ENCODE measurements at regions of chr19 and their contacts with region 1.

Region 1: GRCh38 chr19:2543463-2544442 is 67.8 kb downstream of the GADD45B start:
- DNase-seq: peak; percentile 97
- H3K4me3 ChIP-seq: peak overlapping the region in 1 of 3 experiments; percentile 20
- H3K27ac ChIP-seq: peak overlapping the region; percentile 99
- H3K4me1 ChIP-seq: peaks cover 58% of the 10 kb centered on the region
- H3K27me3 ChIP-seq: no peaks in the 10 kb centered on the region
- CTCF ChIP-seq: peak; percentile 22 to 46
- POLR2A ChIP-seq: peak; percentile 55

Region 2: DNA sequence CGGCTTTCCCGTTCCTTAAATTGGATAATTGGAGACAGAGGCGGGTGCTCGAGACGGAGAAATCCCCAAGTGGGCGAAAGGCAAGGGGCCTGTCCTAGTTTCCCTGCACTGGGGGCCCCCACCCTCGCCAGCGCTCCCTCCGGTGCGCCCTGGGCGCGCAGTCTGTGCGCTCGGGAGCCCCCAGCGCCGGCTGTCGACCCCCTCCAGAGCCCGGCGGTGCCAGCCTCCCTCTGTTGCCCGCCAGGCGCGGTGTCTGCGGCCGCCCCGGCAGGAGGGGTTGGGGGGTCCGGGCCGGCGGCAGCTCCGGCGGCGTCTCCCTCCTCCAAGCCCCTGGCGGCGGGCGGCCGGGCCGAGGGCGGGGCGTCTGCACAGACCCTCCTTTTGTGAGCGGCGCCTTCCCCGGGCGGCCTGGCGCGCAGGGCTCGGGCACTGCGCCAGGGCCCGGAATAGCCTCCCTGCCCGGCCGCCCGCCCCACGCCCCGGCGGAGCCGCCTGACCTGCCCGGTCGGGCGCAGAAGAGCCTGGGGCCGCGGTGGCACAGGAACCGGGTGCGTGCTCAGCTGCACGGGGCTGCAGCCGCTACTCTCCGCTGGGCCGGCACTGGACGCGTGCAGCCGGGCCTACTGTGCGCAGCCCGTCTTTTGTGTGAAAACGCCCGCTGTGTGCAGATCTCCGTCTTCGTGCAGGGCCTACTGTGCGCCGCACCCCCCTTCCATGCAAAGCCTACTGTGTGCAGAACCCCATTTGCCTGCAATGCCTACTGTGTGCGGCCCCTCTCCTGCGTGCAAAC is 54.6 kb before region 1 on chr19:
- CTCF ChIA-PET with region 1: interaction called, 4 read pairs
- POLR2A ChIA-PET with region 1: no interaction called
- dilution Hi-C with region 1: no loop called
- intact Hi-C with region 1: loop called (anchors 1 kb)
- DNase-seq: peak; percentile 34
- H3K4me3 ChIP-seq: peak overlapping the region; percentile 14 to 25 (median 15)
- H3K27ac ChIP-seq: peak overlapping the region; percentile 19
- H3K4me1 ChIP-seq: peaks cover 18% of the 10 kb centered on the region
- H3K27me3 ChIP-seq: no peaks in the 10 kb centered on the region
- CTCF ChIP-seq: no peak
- POLR2A ChIP-seq: no peak

Region 3: GRCh38 chr19:2494444-2495129 is 49.2 kb before region 1 on chr19:
- CTCF ChIA-PET with region 1: interaction called, 4 read pairs
- POLR2A ChIA-PET with region 1: interaction called, 3 read pairs
- dilution Hi-C with region 1: no loop called
- intact Hi-C with region 1: loop called (anchors 1 kb)
- DNase-seq: peak; percentile 57
- H3K4me3 ChIP-seq: peak overlapping the region; percentile 41 to 60 (median 50)
- H3K27ac ChIP-seq: peak overlapping the region; percentile 88
- H3K4me1 ChIP-seq: peaks cover 22% of the 10 kb centered on the region
- H3K27me3 ChIP-seq: no peaks in the 10 kb centered on the region
- CTCF ChIP-seq: no peak
- POLR2A ChIP-seq: no peak

Region 4: GRCh38 chr19:2507109-2507508 is 36.6 kb before region 1 on chr19:
- CTCF ChIA-PET with region 1: interaction called, 3 read pairs
- POLR2A ChIA-PET with region 1: interaction called, 5 read pairs
- dilution Hi-C with region 1: no loop called
- intact Hi-C with region 1: loop called (anchors 1 kb)
- DNase-seq: peak; percentile 93
- H3K4me3 ChIP-seq: no peak overlapping the region
- H3K27ac ChIP-seq: peak overlapping the region; percentile 86
- H3K4me1 ChIP-seq: peaks cover 8% of the 10 kb centered on the region
- H3K27me3 ChIP-seq: no peaks in the 10 kb centered on the region
- CTCF ChIP-seq: no peak
- POLR2A ChIP-seq: peak; percentile 63

Region 5: DNA sequence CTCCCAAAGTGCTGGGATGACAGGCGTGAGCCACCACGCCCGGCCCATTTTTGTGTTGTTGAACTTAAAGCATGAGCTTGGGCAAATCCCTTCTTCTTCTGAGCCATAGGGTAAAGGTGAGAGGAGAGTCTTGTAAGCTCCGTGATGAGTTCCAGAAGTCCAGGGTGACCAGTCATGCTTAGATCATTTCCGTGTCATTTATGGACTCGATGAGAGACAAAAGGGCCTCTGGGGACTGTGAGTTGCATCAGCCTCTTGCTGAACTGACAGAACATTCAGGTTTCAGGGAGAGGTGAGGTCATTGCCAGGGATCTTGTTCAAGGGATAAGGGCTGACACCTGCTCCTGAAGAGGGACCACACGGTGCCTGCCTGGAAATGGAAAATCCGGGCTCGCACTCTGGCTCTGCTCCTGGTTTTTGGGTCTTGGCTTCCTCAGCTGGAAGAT is 14.3 kb before region 1 on chr19:
- CTCF ChIA-PET with region 1: interaction called, 20 read pairs
- POLR2A ChIA-PET with region 1: interaction called, 9 read pairs
- dilution Hi-C with region 1: no loop called
- intact Hi-C with region 1: loop called (anchors 1 kb)
- DNase-seq: peak; percentile 75
- H3K4me3 ChIP-seq: no peak overlapping the region
- H3K27ac ChIP-seq: peak overlapping the region; percentile 75
- H3K4me1 ChIP-seq: peaks cover 36% of the 10 kb centered on the region
- H3K27me3 ChIP-seq: no peaks in the 10 kb centered on the region
- CTCF ChIP-seq: no peak
- POLR2A ChIP-seq: no peak

Region 6: DNA sequence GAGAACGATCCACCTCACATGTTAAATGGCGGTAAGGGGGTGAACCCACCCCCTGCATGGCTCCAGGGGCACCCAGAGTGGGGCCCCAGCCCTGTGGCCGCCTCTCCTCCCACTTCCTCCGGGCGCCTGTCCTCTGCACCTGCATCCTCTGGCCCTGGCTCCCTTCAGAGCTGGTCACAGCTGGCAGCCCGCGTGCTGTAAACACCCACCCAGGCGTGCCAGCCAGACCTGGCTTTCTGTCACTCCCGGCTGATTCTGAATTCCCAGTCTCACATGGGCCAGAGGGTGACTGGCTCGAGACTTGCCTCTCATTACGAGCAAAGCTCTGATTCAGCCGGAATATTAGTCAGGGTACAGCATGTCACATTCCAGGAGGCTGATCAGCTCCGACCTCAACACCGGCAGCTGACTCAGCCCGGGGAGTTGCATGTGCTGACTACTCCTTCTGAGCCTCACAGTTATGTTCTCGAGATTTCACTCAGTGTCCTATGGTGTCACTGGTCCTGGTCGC is 83.6 kb after region 1 on chr19:
- CTCF ChIA-PET with region 1: interaction called, 3 read pairs
- POLR2A ChIA-PET with region 1: no interaction called
- dilution Hi-C with region 1: no loop called
- intact Hi-C with region 1: loop called (anchors 2 kb)
- DNase-seq: peak; percentile 94
- H3K4me3 ChIP-seq: no peak overlapping the region
- H3K27ac ChIP-seq: peak overlapping the region; percentile 93
- H3K4me1 ChIP-seq: peaks cover 20% of the 10 kb centered on the region
- H3K27me3 ChIP-seq: no peaks in the 10 kb centered on the region
- CTCF ChIP-seq: no peak
- POLR2A ChIP-seq: no peak

Region 7: DNA sequence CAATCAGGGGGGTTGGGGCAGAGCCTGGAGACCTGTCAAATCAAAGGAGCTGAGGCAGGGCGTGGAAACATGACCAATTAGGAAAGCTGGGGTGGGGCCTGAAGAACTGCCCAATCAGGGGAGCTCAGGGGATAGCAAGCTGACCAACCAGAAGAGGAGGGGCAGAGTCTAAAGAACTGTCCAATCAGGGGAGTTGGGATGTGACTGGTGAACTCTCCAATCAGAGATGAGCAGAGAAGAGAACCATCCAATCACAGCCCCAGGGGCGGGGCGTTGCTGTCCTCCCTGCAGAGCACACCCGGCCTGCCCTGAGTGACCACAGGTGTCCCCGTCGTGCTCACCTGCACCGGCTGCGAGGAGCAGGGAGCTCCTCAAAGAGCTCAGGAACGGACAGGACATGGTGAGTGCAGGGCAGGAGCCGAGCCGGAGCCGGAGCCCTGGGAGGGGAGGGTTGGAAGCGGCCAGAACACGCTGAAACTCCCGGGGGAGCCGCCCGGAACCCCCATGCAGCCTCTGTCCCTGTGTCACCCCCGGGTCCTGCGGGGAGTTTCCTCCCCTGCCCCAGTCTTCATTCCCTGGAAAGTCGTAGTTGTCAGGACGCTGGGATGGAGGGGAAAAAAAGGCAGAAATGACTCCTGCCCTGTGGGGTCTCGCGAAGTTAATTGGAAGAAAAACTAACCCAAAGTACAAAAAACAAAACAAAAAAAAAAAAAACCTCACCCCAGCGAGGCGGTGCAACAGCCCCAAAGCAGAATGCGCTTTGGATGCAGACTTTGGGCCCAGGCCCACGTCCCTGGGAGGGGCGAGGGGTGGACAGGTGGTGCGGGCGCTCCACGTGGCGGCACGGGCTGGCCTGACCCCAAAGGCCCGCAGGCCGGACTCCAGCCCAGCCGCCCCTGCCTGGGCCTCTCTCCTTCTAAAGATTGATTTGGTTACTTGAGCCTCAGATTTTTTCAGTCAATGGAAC is 323.6 kb after region 1 on chr19 and contains the start of gene ZNF556:
- CTCF ChIA-PET with region 1: no interaction called
- POLR2A ChIA-PET with region 1: no interaction called
- dilution Hi-C with region 1: no loop called
- intact Hi-C with region 1: no loop called
- DNase-seq: no peak
- H3K4me3 ChIP-seq: no peak within 1 kb of the TSS
- H3K27ac ChIP-seq: no peak within 1 kb of the TSS
- H3K4me1 ChIP-seq: no peaks in the 10 kb centered on the region
- H3K27me3 ChIP-seq: no peaks in the 10 kb centered on the region
- CTCF ChIP-seq: no peak
- POLR2A ChIP-seq: no peak
- total RNA-seq, gene ZNF556: not detected in 2 replicates